ENCODE measurements at regions of chr12 and their contacts with region 1.

Region 1: DNA sequence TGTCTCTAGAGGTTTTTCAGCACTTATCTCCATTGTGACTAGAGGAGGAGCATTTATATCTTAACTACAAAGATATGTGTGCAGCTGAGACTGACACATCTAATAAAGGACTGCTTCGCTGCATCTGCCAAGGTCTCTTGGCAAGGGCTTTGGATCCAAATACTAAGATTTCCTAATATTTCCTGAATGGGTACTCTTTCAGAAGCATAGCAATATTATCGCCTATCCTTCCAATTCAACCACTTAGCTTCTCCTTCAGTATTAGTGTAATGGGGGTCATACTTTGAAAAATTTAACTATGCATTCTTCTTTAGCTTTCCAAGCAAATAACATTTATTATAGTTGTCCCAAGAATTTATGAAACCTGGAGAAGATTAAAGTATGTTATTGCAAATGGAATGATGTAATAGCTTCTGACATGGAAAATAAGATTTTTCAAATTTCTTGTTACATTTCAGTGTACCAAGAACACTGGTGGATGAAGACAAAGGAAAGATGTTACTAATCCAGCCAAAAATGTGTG is 243.0 kb upstream of the PDE3A start:
- DNase-seq: no peak
- H3K4me3 ChIP-seq: no peak overlapping the region
- H3K27ac ChIP-seq: no peak overlapping the region
- H3K4me1 ChIP-seq: no peaks in the 10 kb centered on the region
- H3K27me3 ChIP-seq: no peaks in the 10 kb centered on the region
- CTCF ChIP-seq: no peak

Region 2: GRCh38 chr12:19597167-19598026 is 527.9 kb before region 1 on chr12:
- CTCF ChIA-PET with region 1: no interaction called
- POLR2A ChIA-PET with region 1: interaction called, 44 read pairs
- intact Hi-C with region 1: no loop called
- DNase-seq: no peak
- H3K4me3 ChIP-seq: no peak overlapping the region
- H3K27ac ChIP-seq: no peak overlapping the region
- H3K4me1 ChIP-seq: no peaks in the 10 kb centered on the region
- H3K27me3 ChIP-seq: no peaks in the 10 kb centered on the region
- CTCF ChIP-seq: no peak

Region 3: GRCh38 chr12:20050221-20050620 is 75.1 kb before region 1 on chr12:
- CTCF ChIA-PET with region 1: no interaction called
- POLR2A ChIA-PET with region 1: no interaction called
- intact Hi-C with region 1: no loop called
- DNase-seq: no peak
- H3K4me3 ChIP-seq: no peak overlapping the region
- H3K27ac ChIP-seq: no peak overlapping the region
- H3K4me1 ChIP-seq: no peaks in the 10 kb centered on the region
- H3K27me3 ChIP-seq: no peaks in the 10 kb centered on the region
- CTCF ChIP-seq: no peak

Region 4: GRCh38 chr12:20140751-20141150 is 15.4 kb after region 1 on chr12:
- CTCF ChIA-PET with region 1: no interaction called
- POLR2A ChIA-PET with region 1: no interaction called
- intact Hi-C with region 1: no loop called
- DNase-seq: no peak
- H3K4me3 ChIP-seq: no peak overlapping the region
- H3K27ac ChIP-seq: no peak overlapping the region
- H3K4me1 ChIP-seq: no peaks in the 10 kb centered on the region
- H3K27me3 ChIP-seq: no peaks in the 10 kb centered on the region
- CTCF ChIP-seq: no peak

Measured in PC-9 (cell line).